Motor neuron (in vitro differentiated cells): ENCODE measurements at regions of chr2 and their contacts with region 1.

Region 1: GRCh38 chr2:222690564-222691200 is 19.2 kb downstream of the MOGAT1 start:
- ATAC-seq: peak in 7 of 8 experiments; percentile 41 to 96 (median 73)
- H3K4me3 ChIP-seq: no peak overlapping the region
- H3K27ac ChIP-seq: no peak overlapping the region
- H3K4me1 ChIP-seq: no peaks in the 10 kb centered on the region

Region 2: DNA sequence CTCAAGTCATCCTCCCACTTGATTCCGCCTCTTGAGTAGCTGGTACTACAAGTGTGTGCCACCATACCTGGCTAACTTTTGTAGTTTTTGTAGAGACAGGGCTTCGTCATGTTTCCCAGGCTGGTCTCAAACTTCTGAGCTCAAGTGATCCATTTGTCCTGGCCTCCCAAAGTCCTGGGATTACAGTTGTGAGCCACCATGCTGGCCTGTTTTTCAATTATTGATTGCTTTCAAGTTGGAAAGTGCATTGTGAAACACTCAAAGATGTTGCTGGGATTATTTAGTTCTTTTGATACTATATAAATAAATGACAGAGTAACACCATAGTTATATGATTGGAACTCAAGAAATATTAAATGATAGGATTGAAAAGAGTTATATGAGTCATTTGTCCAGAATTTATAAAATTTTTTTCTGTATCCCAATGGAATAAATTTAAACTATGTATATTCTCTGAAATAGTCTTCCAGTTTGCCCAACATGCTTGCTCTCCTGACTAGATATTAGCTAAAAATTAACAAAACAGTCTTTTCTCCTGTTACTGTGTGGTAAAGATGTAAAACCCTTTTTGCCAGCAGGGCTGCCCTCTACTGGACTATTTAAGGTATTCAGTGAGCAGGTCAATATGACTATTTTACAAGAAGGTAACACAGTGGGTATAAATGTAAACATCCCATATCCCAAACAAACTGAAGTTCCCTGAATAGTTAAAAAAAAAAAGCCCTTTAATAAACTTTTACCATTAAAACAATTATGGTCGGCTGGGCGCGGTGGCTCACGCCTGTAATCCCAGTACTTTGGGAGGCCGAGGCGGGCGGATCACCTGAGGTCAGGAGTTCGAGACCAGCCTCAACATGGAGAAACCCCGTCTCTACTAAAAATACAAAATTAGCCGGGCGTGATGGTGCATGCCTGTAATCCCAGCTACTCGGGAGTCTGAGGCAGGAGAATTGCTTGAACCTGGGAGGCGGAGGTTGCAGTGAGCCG is 212.8 kb after region 1 on chr2:
- in situ Hi-C with region 1: loop called in 4 of 9 experiments (anchors 10 to 25 kb)
- ATAC-seq: peak in 4 of 8 experiments; percentile 17 to 39 (median 35)
- H3K4me3 ChIP-seq: no peak overlapping the region
- H3K27ac ChIP-seq: no peak overlapping the region
- H3K4me1 ChIP-seq: no peaks in the 10 kb centered on the region

Region 3: DNA sequence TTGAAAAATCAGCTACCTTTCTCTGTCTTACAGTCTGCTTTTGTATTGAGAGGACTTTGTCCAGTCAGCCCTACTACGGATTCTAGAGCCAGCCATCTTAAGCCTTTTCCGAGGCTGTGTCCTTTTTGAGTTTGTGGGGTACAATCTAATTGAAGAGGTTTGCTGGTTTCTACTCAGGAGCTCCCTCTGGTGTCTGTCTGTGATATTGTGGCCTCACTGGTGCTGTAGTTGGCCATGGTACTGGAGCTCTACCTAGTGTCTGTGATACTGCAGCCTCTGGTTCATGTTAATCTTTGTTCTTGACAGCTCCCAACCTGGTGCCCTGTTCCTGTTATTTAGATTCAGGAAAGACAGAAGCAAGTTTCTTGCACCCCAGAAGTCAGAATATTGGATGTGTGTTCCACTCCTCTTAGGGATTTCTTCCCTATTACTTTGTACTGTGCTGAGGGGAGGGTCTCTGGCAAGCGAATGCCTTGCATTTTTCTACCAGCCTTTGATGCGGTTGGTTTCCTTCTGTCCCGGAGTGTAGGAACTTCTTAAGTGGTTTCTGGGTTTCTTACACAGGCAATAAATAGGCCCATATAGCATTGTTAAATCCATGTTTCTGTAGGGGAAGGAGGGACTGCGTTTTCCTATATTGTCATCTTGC is 248.7 kb after region 1 on chr2:
- in situ Hi-C with region 1: loop called in 2 of 9 experiments (anchors 10 kb)
- ATAC-seq: peak in 5 of 8 experiments; percentile 24 to 86 (median 80)
- H3K4me3 ChIP-seq: no peak overlapping the region
- H3K27ac ChIP-seq: no peak overlapping the region
- H3K4me1 ChIP-seq: no peaks in the 10 kb centered on the region